ENCODE measurements at regions of chr9 and their contacts with region 1.

Region 1: GRCh38 chr9:77149879-77150278 is 27.5 kb upstream of the VPS13A start:
- DNase-seq: no peak
- ATAC-seq: peak; percentile 63
- H3K4me3 Mint-ChIP-seq: no peak overlapping the region
- H3K27ac Mint-ChIP-seq: no peak overlapping the region
- H3K4me1 Mint-ChIP-seq: peaks cover 14% of the 10 kb centered on the region
- H3K27me3 Mint-ChIP-seq: peaks cover 4% of the 10 kb centered on the region; the same call in 1 of the 2 replicates
- CTCF ChIP-seq: no peak

Region 2: GRCh38 chr9:76996700-76997099 is 153.2 kb before region 1 on chr9:
- CTCF ChIA-PET with region 1: interaction called, 12 read pairs
- POLR2A ChIA-PET with region 1: no interaction called
- DNase-seq: peak; percentile 72
- ATAC-seq: peak; percentile 98
- H3K4me3 Mint-ChIP-seq: no peak overlapping the region
- H3K27ac Mint-ChIP-seq: no peak overlapping the region
- H3K4me1 Mint-ChIP-seq: peaks cover 13% of the 10 kb centered on the region
- H3K27me3 Mint-ChIP-seq: no peaks in the 10 kb centered on the region
- CTCF ChIP-seq: peak; percentile 59

Region 3: DNA sequence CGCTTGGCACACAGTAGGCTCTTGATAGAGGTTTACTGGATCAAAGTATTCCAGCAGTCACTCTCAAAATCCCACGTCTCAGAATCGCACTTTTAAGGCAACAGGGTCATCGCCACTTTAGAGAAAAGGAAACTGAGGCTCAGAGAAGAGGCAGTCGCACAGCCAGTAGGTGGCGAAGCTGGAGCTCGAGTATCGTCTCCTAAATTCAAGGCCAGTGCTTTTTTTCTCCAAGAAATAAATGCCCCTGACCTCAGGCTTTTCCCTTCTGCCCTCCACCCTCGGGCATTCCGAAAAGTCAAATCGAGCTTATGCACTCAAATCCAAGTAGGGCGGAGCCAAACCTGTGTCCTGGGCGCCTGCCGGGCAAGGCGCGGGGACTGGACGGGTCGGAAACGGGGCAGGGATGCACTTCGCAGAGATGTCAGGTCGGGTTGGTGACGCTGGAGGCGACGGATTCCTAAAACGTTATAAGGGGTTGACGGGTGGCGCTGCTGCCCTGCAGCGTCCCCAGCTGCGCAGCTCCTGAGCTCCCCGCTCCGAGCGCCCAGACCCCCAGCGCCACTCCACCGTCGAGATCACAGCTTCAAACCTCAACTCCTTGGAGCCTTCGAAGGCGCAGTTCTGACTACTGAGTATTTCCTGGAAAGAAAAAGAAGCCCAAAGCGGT is 135.1 kb before region 1 on chr9:
- CTCF ChIA-PET with region 1: interaction called, 85 read pairs
- POLR2A ChIA-PET with region 1: interaction called, 3 read pairs
- DNase-seq: peak; percentile 53
- ATAC-seq: no peak
- H3K4me3 Mint-ChIP-seq: peak overlapping the region; percentile 78
- H3K27ac Mint-ChIP-seq: no peak overlapping the region
- H3K4me1 Mint-ChIP-seq: peaks cover 64% of the 10 kb centered on the region
- H3K27me3 Mint-ChIP-seq: peaks cover 97% of the 10 kb centered on the region
- CTCF ChIP-seq: no peak

Region 4: DNA sequence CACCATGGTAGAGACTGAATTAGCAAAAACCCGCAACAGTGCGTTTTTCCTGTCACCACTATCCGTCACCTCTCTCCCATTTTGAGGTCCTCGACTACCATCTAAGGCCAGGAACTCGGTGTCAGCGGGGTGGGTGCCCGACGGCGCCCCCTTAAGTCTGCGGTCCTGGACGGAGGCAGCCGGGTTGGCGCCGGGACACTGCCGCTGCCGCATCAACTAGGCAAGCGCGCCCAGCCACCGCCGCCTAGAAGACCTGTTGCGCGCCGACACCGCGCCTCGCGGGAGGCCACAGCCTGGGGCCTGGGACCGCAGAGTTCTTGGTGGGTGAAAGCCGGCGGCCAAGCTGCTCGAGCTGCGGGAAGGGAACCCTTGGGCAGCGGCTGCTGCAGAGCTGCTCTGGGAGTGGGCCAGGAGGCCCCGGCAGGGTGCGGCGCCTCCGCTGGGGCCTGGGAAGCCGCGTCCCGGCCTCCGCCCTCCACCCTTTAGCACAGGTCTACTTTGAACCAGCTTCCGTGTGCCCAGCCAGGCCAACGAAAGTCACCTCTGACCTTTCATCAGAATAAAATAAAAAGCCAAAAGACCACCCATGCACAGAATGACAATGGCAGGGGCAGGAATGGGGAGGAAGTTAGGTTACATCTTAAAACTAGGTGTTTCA is 127.0 kb before region 1 on chr9:
- CTCF ChIA-PET with region 1: interaction called, 85 read pairs
- POLR2A ChIA-PET with region 1: interaction called, 3 read pairs
- DNase-seq: peak; percentile 73
- ATAC-seq: peak; percentile 46
- H3K4me3 Mint-ChIP-seq: peak overlapping the region; percentile 65
- H3K27ac Mint-ChIP-seq: no peak overlapping the region
- H3K4me1 Mint-ChIP-seq: peaks cover 60% of the 10 kb centered on the region
- H3K27me3 Mint-ChIP-seq: peaks cover 81% of the 10 kb centered on the region
- CTCF ChIP-seq: no peak

Region 5: DNA sequence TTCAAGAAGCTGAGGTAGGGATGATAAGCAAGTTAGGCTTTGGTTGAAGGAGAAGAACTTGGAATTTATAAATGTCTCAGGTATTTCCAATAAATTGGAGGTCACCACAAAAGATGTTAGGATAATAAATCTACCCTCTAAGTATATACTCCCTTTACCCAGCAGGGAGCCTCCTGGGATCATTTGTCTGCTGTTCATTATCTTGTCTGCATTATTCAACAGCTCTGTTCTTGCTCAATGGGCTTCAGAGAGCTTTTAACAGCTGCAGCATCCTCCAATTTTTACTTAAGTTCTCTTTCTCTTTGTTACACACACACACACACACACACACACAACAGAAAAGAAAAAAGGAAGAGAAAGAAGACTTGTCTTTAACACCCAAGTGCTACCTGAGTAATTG is 24.2 kb before region 1 on chr9:
- CTCF ChIA-PET with region 1: interaction called, 14 read pairs
- POLR2A ChIA-PET with region 1: no interaction called
- DNase-seq: no peak
- ATAC-seq: no peak
- H3K4me3 Mint-ChIP-seq: no peak overlapping the region
- H3K27ac Mint-ChIP-seq: no peak overlapping the region
- H3K4me1 Mint-ChIP-seq: peaks cover 40% of the 10 kb centered on the region
- H3K27me3 Mint-ChIP-seq: peaks cover 20% of the 10 kb centered on the region
- CTCF ChIP-seq: no peak

Region 6: GRCh38 chr9:77163884-77164283 is 14.0 kb after region 1 on chr9:
- CTCF ChIA-PET with region 1: interaction called, 34 read pairs
- POLR2A ChIA-PET with region 1: no interaction called
- DNase-seq: no peak
- ATAC-seq: no peak
- H3K4me3 Mint-ChIP-seq: no peak overlapping the region
- H3K27ac Mint-ChIP-seq: no peak overlapping the region
- H3K4me1 Mint-ChIP-seq: peaks cover 10% of the 10 kb centered on the region
- H3K27me3 Mint-ChIP-seq: no peaks in the 10 kb centered on the region; the same call in 1 of the 2 replicates
- CTCF ChIP-seq: no peak

Measured in WTC11 (cell line).